ENCODE measurements at regions of chr6 and their contacts with region 1.

Region 1: GRCh38 chr6:109095027-109095834 is at the start of gene CEP57L1:
- DNase-seq: peak; percentile 73 to 98 (median 94)
- ATAC-seq: peak; percentile 85
- H3K4me3 ChIP-seq: peak within 1 kb of the TSS; percentile 84
- H3K27ac ChIP-seq: peak within 1 kb of the TSS; percentile 94
- H3K4me1 ChIP-seq: peaks cover 0 to 10% of the 10 kb centered on the region in 2 experiments; a peak in 2 of 5 replicates
- H3K27me3 ChIP-seq: no peaks in the 10 kb centered on the region
- CTCF ChIP-seq: peak; percentile 31 to 46 (median 38); a peak in 5 of 6 replicates
- EP300 ChIP-seq: no peak; the same call in none of the 2 replicates
- POLR2A ChIP-seq: peak; percentile 80
- RAD21 ChIP-seq: no peak
- polyA plus RNA-seq, gene CEP57L1: 70.0 to 88.6 TPM

Region 2: DNA sequence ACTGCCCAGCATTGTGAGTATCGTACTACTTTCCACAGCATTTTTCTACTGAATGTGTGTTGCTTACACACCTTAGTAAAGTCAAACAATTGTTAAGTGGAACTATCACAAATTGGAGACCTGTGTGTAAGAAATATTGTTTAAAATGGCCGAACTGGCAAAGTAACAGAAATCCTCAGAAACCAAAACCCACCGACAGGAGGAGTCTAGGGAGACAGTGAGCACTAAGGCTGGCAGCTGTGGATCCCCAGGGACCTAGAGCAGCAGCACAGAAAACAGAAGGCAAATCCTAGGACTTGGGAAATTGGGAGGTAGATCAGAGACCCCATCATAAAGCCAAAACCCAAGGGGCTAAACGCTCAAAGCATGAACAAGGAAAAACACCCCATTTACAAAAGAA is 70.4 kb before region 1 on chr6:
- CTCF ChIA-PET with region 1: no interaction called
- POLR2A ChIA-PET with region 1: no interaction called
- in situ Hi-C with region 1: no loop called
- intact Hi-C with region 1: no loop called
- DNase-seq: peak in 2 of 4 experiments; percentile 17 to 22
- ATAC-seq: peak; percentile 75
- H3K4me3 ChIP-seq: no peak overlapping the region
- H3K27ac ChIP-seq: no peak overlapping the region
- H3K4me1 ChIP-seq: no peaks in the 10 kb centered on the region
- H3K27me3 ChIP-seq: no peaks in the 10 kb centered on the region
- CTCF ChIP-seq: peak; percentile 22 to 39 (median 25); a peak in 3 of 6 replicates
- EP300 ChIP-seq: no peak
- POLR2A ChIP-seq: no peak
- RAD21 ChIP-seq: no peak; a peak in 1 of 4 replicates

Region 3: DNA sequence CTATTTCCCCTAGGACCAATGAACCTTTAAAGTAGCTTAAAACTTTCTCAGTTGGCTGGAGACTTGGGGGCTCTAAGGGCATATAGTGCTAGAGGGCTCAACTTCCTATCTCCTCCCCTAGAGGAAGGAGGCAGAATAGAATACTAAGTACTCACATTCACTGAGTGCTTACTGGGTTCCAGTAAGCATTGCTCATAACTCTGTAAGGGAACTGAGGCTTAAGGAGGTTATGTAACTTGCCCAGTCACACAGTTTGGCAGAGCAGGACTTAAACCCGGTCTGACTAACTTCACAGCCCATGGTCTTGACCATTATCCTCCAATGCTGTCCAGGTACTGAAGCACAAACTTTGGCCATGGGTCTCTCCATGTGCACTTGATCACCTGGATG is 13.0 kb before region 1 on chr6:
- CTCF ChIA-PET with region 1: no interaction called
- POLR2A ChIA-PET with region 1: interaction called, 12 read pairs
- in situ Hi-C with region 1: no loop called
- intact Hi-C with region 1: no loop called
- DNase-seq: peak in 1 of 4 experiments; percentile 23
- ATAC-seq: peak; percentile 91
- H3K4me3 ChIP-seq: no peak overlapping the region
- H3K27ac ChIP-seq: no peak overlapping the region
- H3K4me1 ChIP-seq: no peaks in the 10 kb centered on the region; a peak in 1 of 5 replicates
- H3K27me3 ChIP-seq: no peaks in the 10 kb centered on the region
- CTCF ChIP-seq: peak in 2 of 3 experiments; percentile 23 to 24; a peak in 2 of 6 replicates
- EP300 ChIP-seq: no peak
- POLR2A ChIP-seq: no peak
- RAD21 ChIP-seq: no peak

Region 4: DNA sequence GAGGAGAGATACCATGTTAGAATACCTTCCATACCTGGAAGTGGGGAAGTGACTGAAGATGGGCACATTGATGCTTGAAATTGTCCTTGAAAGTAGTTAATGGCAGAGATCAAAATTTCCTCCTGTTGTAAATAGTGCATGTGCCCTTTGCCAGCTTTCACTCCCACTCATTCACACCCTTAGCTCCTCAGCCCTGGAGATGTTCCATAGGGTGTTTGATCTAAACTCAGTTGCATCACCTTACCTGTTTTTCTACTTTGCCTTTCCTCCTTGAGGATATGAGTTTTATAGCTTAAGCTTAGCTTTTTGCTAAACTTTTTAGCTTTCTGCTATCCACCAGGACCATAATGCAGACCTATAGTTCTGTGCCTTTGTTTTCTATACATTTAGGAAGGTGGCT is 69.1 kb after region 1 on chr6:
- CTCF ChIA-PET with region 1: no interaction called
- POLR2A ChIA-PET with region 1: interaction called, 3 read pairs
- in situ Hi-C with region 1: no loop called
- intact Hi-C with region 1: loop called (anchors 5 kb)
- DNase-seq: no peak
- ATAC-seq: no peak
- H3K4me3 ChIP-seq: no peak overlapping the region
- H3K27ac ChIP-seq: no peak overlapping the region
- H3K4me1 ChIP-seq: peaks cover 0 to 11% of the 10 kb centered on the region in 2 experiments; a peak in 2 of 5 replicates
- H3K27me3 ChIP-seq: no peaks in the 10 kb centered on the region
- CTCF ChIP-seq: no peak
- EP300 ChIP-seq: no peak
- POLR2A ChIP-seq: no peak
- RAD21 ChIP-seq: no peak

Region 5: DNA sequence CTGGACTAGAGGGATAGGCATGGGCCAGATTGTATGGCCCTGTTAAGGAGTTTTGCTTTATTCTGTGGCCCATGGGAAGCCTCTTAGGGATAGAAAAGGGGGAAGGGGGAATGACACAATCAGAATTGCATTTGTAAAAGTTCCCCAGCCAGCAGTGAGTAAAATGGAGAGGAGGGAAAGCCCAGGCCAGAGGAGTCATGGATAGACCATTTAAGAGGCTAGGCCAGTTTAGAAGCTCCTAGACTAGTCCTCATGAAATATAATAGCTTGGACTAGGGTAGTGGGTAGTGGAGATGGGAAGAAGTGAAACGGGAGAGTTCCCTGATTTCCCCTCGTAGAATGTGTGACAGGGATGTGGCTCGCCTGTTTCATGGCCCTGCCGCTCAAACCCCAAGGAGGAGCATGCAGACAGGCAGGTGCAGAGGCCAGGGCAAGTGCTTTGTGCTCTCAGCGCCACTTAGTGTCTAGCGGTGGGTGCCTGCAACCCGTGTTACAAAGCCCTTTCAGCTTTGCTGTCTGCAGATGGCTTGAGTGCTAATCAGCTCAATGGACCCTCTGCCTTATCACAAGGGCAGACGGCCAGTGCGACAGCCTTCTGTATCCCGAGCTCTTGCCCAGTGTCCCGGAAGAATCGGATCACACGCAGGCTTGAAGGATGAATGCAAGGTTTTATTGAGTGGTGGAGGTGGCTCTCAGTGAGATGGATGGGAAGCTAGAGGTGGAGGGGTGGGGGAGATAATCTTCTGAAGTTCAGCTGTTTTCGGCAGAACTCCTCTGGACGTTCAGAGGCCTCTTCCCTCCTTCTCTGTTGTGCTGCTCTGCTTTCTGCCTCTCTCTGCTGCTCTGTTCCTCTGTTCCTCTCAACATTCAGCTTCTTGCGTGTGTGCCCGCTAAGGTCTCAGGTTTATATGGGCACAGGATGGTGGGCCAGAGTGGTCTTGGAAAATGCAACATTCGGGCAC is 141.2 kb after region 1 on chr6:
- CTCF ChIA-PET with region 1: no interaction called
- POLR2A ChIA-PET with region 1: interaction called, 5 read pairs
- in situ Hi-C with region 1: no loop called
- intact Hi-C with region 1: loop called (anchors 5 kb)
- DNase-seq: peak; percentile 43 to 92 (median 60)
- ATAC-seq: peak; percentile 94
- H3K4me3 ChIP-seq: 0 out of 2 replicates have a peak overlapping the region, but pooled peaks have one; percentile 1
- H3K27ac ChIP-seq: peak overlapping the region; percentile 93
- H3K4me1 ChIP-seq: peaks cover 19 to 57% of the 10 kb centered on the region in 2 experiments
- H3K27me3 ChIP-seq: no peaks in the 10 kb centered on the region
- CTCF ChIP-seq: peak; percentile 65 to 76 (median 73)
- EP300 ChIP-seq: peak; percentile 23; the same call in 1 of the 2 replicates
- POLR2A ChIP-seq: no peak
- RAD21 ChIP-seq: peak; percentile 75 to 92